H1 (cell line): ENCODE measurements at regions of chr15 and their contacts with region 1.

Region 1: GRCh38 chr15:68559345-68560310 is 19.2 kb upstream of the CORO2B start:
- DNase-seq: peak; percentile 80 to 95
- H3K4me3 ChIP-seq: peak overlapping the region; percentile 36 to 68 (median 52)
- H3K27ac ChIP-seq: no peak overlapping the region
- H3K4me1 ChIP-seq: peaks cover 0 to 22% (median 16%) of the 10 kb centered on the region in 4 experiments; a peak in 6 of 7 replicates
- H3K27me3 ChIP-seq: peaks cover 0 to 7% (median 4%) of the 10 kb centered on the region in 4 experiments; a peak in 3 of 7 replicates
- CTCF ChIP-seq: peak; percentile 86 to 93 (median 90)
- EP300 ChIP-seq: no peak
- POLR2A ChIP-seq: peak in 1 of 2 experiments; percentile 41; a peak in 1 of 3 replicates
- RAD21 ChIP-seq: peak; percentile 78 to 86

Region 2: DNA sequence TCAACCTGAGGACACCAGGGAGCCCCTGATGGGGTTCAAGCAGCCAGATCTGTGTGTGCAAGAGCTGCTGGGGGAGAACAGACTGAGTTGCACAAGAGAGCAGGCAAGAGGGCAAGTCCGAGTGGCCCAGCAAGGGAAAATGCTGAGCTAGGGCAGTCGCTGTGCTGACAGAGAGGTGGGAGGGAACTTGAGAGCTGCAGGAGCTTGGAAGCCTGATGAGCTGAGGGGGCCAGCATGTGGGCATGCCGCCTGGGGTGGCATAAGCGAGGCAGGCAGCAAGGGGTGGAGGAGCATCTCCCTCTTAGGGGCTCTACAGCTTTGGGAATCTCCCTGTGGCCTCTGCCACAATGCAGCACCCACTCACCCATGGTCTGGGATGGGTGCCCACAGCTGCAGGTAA is 14.4 kb after region 1 on chr15:
- CTCF ChIA-PET with region 1: interaction called, 17 read pairs
- POLR2A ChIA-PET with region 1: interaction called, 31 read pairs
- DNase-seq: no peak
- H3K4me3 ChIP-seq: no peak overlapping the region
- H3K27ac ChIP-seq: no peak overlapping the region
- H3K4me1 ChIP-seq: peaks cover 16 to 55% (median 34%) of the 10 kb centered on the region in 4 experiments
- H3K27me3 ChIP-seq: peaks cover 0 to 22% (median 15%) of the 10 kb centered on the region in 4 experiments; a peak in 5 of 7 replicates
- CTCF ChIP-seq: no peak
- EP300 ChIP-seq: no peak
- POLR2A ChIP-seq: no peak
- RAD21 ChIP-seq: no peak

Region 3: GRCh38 chr15:68644077-68644904 is 84.7 kb after region 1 on chr15:
- CTCF ChIA-PET with region 1: interaction called, 14 read pairs
- POLR2A ChIA-PET with region 1: no interaction called
- DNase-seq: no peak
- H3K4me3 ChIP-seq: no peak overlapping the region
- H3K27ac ChIP-seq: no peak overlapping the region
- H3K4me1 ChIP-seq: peaks cover 0 to 12% (median 5%) of the 10 kb centered on the region in 4 experiments; a peak in 5 of 7 replicates
- H3K27me3 ChIP-seq: no peaks in the 10 kb centered on the region
- CTCF ChIP-seq: peak in 2 of 3 experiments; percentile 16 to 18; a peak in 2 of 4 replicates
- EP300 ChIP-seq: no peak
- POLR2A ChIP-seq: no peak
- RAD21 ChIP-seq: peak; percentile 31 to 51

Region 4: DNA sequence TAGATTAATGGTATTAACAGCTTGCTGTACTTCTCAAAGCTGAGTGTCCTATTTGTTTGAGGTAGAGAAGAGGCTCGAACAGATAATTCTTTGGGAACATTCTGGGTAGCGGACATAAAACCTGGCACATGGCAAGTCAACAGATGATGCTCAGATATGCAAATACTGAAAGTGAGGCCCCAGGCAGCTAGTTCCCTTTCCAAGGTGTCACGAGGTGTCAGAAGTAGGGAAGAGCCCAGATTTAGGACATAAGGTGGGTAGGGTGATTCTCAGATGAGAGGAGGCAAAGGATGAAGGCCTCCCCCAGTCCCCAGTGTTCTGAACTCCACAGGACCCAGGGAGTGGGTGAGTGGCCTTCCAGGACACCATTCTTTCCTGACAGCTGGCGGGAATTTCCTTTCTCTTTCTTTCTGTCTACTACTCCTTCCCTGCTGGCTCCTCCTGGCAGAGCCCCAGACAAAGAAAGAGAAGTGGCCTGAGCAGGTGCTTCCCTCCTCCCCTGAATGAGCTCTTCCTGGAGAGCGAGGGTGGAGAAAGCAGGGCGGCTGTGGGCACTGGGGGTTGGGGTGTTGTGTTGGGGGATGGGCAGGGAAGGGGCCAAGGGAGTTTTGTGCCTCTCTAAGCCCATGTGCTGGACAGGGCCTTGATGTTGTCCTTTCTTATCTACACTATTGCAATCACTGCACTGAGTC is 106.6 kb after region 1 on chr15:
- CTCF ChIA-PET with region 1: interaction called, 721 read pairs
- POLR2A ChIA-PET with region 1: no interaction called
- DNase-seq: peak in 1 of 2 experiments; percentile 55
- H3K4me3 ChIP-seq: peak overlapping the region in 1 of 4 experiments; percentile 14; a peak in 2 of 8 replicates
- H3K27ac ChIP-seq: peak overlapping the region; percentile 44; the same call in 1 of the 2 replicates
- H3K4me1 ChIP-seq: peaks cover 5 to 13% (median 9%) of the 10 kb centered on the region in 4 experiments; a peak in 6 of 7 replicates
- H3K27me3 ChIP-seq: peaks cover 0 to 2% (median 0%) of the 10 kb centered on the region in 4 experiments; a peak in 1 of 7 replicates
- CTCF ChIP-seq: no peak
- EP300 ChIP-seq: peak in 1 of 2 experiments; percentile 46; a peak in 1 of 3 replicates
- POLR2A ChIP-seq: no peak
- RAD21 ChIP-seq: no peak; a peak in 1 of 4 replicates

Region 5: GRCh38 chr15:68749793-68750192 is 190.2 kb after region 1 on chr15:
- CTCF ChIA-PET with region 1: no interaction called
- POLR2A ChIA-PET with region 1: no interaction called
- DNase-seq: no peak
- H3K4me3 ChIP-seq: no peak overlapping the region
- H3K27ac ChIP-seq: no peak overlapping the region
- H3K4me1 ChIP-seq: no peaks in the 10 kb centered on the region
- H3K27me3 ChIP-seq: no peaks in the 10 kb centered on the region
- CTCF ChIP-seq: no peak
- EP300 ChIP-seq: no peak
- POLR2A ChIP-seq: no peak
- RAD21 ChIP-seq: no peak

Region 6: GRCh38 chr15:68934341-68934740 is 374.7 kb after region 1 on chr15:
- CTCF ChIA-PET with region 1: no interaction called
- POLR2A ChIA-PET with region 1: no interaction called
- DNase-seq: no peak
- H3K4me3 ChIP-seq: no peak overlapping the region
- H3K27ac ChIP-seq: no peak overlapping the region
- H3K4me1 ChIP-seq: no peaks in the 10 kb centered on the region
- H3K27me3 ChIP-seq: no peaks in the 10 kb centered on the region
- CTCF ChIP-seq: no peak
- EP300 ChIP-seq: no peak
- POLR2A ChIP-seq: no peak
- RAD21 ChIP-seq: no peak